ENCODE measurements at regions of chr2 and their contacts with region 1.

Region 1: GRCh38 chr2:235142601-235143000 is 190.8 kb downstream of the SH3BP4 start:
- DNase-seq: peak; percentile 39 to 80
- ATAC-seq: peak; percentile 94

Region 2: GRCh38 chr2:235588750-235589149 is 446.1 kb after region 1 on chr2:
- intact Hi-C with region 1: loop called (anchors 5 to 10 kb)
- DNase-seq: no peak
- ATAC-seq: peak; percentile 70